ENCODE measurements at regions of chr6 and their contacts with region 1.

Region 1: DNA sequence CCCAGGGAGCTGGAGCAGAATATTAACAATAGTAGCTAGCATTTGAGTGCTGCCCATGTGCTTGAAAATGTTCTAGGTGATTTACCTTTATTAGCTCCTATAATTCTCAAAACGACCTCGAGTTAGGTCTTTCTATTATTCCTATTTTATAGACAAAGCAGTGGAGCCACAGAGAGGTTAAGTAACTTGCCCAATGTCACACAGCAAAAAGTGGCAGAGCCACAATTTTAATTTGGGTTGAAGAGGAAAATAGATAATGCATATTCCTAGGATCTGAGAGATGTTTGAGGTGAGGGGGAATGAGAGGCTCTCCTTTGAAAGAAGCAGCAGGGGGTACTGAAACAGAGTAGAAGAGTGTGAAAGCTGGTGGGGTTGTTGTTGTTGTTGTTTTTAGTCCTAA is 354.5 kb upstream of the SLC35B3 start:
- DNase-seq: no peak
- H3K4me3 ChIP-seq: no peak overlapping the region
- H3K27ac ChIP-seq: no peak overlapping the region
- H3K4me1 ChIP-seq: no peaks in the 10 kb centered on the region
- H3K27me3 ChIP-seq: no peaks in the 10 kb centered on the region
- CTCF ChIP-seq: no peak

Region 2: DNA sequence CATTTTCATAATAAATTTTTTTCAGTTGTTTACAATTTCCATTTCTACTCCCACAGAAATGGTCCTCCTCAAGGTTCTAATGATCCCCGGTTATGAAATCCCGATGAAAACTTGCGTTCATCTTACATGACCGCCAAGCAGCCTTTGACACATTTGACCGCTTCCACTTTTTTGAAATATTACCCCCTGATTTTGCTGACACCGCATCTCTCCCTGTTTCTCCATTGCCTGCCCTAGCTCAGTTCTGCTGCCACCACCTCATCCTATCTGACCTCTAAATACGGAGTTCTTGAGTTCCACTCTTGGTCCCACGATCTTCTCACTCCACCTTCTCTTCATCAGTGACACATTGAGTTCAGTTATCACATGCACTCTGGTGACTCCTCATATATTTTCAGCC is 428.6 kb before region 1 on chr6:
- CTCF ChIA-PET with region 1: no interaction called
- POLR2A ChIA-PET with region 1: no interaction called
- intact Hi-C with region 1: no loop called
- DNase-seq: no peak
- H3K4me3 ChIP-seq: no peak overlapping the region
- H3K27ac ChIP-seq: no peak overlapping the region
- H3K4me1 ChIP-seq: no peaks in the 10 kb centered on the region
- H3K27me3 ChIP-seq: peaks cover 8% of the 10 kb centered on the region; the same call in 1 of the 2 replicates
- CTCF ChIP-seq: no peak

Region 3: GRCh38 chr6:8764733-8765132 is 25.1 kb before region 1 on chr6:
- CTCF ChIA-PET with region 1: interaction called, 10 read pairs
- POLR2A ChIA-PET with region 1: no interaction called
- intact Hi-C with region 1: no loop called
- DNase-seq: no peak
- H3K4me3 ChIP-seq: no peak overlapping the region
- H3K27ac ChIP-seq: no peak overlapping the region
- H3K4me1 ChIP-seq: no peaks in the 10 kb centered on the region
- H3K27me3 ChIP-seq: no peaks in the 10 kb centered on the region
- CTCF ChIP-seq: no peak

Region 4: GRCh38 chr6:9007062-9007461 is 217.2 kb after region 1 on chr6:
- CTCF ChIA-PET with region 1: no interaction called
- POLR2A ChIA-PET with region 1: no interaction called
- intact Hi-C with region 1: no loop called
- DNase-seq: no peak
- H3K4me3 ChIP-seq: no peak overlapping the region
- H3K27ac ChIP-seq: no peak overlapping the region
- H3K4me1 ChIP-seq: no peaks in the 10 kb centered on the region
- H3K27me3 ChIP-seq: no peaks in the 10 kb centered on the region
- CTCF ChIP-seq: no peak

Measured in PC-9 (cell line).